Activated CD4-positive, alpha-beta T cell treated with anti-CD3 and anti-CD28 coated beads for 36 hours (primary cell): ENCODE measurements at regions of chr20 and their contacts with region 1.

Region 1: DNA sequence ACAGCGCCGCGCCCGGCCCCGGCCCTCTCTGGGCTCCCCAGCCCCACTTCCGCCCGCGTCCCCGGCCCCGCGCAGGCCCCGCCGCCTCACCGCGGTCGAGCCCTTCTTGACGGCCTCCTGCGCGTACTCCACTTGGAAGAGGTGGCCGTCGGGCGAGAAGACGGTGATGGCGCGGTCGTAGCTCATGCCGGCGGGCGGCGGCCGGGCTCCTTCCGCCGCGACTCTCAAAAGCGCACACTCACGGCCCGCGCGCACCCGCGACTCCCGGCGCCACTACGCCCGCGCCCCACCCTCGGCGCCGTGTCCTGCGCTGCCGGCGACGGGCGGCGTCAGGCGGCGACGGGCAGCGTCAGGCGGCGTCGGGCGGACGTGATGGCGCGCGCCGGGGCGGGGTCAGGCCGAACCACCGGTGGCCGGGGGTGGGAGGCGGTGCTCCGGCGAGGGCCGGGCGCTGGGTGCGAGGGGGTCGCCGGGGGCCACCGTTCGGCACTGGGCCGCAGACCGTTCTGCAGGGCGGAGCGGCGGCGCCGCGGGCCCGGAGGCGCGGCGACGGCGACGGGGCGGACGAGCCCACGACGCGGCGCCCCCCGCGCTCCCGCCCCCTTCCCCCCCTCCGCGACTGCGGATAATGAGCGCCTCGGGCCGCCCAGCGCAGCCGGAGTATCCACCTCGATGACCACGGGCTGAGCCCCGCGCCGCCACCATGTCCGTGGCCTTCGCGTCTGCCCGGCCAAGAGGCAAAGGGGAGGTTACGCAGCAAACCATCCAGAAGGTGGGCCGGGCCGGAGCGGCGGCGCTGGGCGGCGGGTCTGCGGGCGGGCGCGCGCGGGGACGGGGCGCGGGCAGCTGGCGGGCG is at the starts of genes PSMA7 and SS18L1:
- DNase-seq: peak; percentile 92
- ATAC-seq: peak; percentile 87
- H3K4me3 Mint-ChIP-seq: peak within 1 kb of the TSS; percentile 89
- H3K27ac Mint-ChIP-seq: peak within 1 kb of the TSS; percentile 91
- H3K4me1 Mint-ChIP-seq: peaks cover 61% of the 10 kb centered on the region
- H3K27me3 Mint-ChIP-seq: no peaks in the 10 kb centered on the region
- total RNA-seq, gene PSMA7: 208 to 296 TPM
- total RNA-seq, gene SS18L1: 14.3 to 16.6 TPM

Region 2: GRCh38 chr20:62025832-62026563 is 117.3 kb before region 1 on chr20:
- CTCF ChIA-PET with region 1: interaction called, 5 read pairs
- POLR2A ChIA-PET with region 1: no interaction called
- intact Hi-C with region 1: loop called (anchors 2 to 5 kb)
- DNase-seq: peak; percentile 45
- ATAC-seq: peak; percentile 81
- H3K4me3 Mint-ChIP-seq: no peak overlapping the region
- H3K27ac Mint-ChIP-seq: peak overlapping the region; percentile 22
- H3K4me1 Mint-ChIP-seq: peaks cover 54% of the 10 kb centered on the region
- H3K27me3 Mint-ChIP-seq: no peaks in the 10 kb centered on the region

Region 3: DNA sequence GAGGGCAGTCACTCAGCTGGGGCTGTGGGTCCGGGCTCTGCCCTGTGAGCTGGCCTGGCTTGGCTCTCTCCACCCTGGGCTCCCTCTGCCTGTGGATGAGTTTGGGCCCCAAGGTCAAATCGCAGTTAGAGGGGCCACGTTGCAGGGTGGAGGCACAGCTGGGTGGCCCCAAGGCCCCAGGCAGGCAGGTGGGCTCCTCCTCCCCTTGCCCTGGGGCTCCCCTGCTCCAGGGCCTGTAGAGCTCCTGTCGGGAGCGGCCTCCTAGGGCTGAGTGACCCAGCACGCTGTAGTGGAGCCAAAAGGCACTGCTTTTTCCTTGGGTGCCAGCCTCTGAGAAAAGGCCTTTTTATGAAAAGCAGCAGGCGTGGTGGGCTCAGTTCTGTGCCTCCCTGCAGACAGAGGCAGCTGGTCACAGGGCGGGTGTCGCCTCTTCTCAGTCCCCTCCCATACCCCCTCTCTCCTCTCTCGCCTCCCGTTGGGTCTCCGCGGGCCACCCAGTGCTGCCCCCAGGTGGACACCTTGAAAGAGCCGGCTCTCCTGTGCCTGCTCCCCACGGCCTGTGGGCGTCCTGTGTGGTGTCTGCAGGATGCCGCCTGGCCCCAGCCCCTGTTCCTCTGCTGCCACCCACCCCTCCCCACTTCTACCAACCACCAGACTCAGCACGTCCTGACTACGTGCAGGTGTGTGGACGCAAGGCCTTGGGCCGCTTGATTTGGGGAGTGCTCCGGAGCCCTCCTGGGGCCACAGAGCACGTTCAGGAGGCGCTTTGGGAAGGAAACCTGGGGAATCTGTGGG is 13.4 kb after region 1 on chr20:
- CTCF ChIA-PET with region 1: interaction called, 3 read pairs
- POLR2A ChIA-PET with region 1: interaction called, 3 read pairs
- intact Hi-C with region 1: loop called in 1 of 2 experiments (anchors 1 kb)
- DNase-seq: peak; percentile 86
- ATAC-seq: peak; percentile 85
- H3K4me3 Mint-ChIP-seq: no peak overlapping the region
- H3K27ac Mint-ChIP-seq: no peak overlapping the region
- H3K4me1 Mint-ChIP-seq: peaks cover 15% of the 10 kb centered on the region
- H3K27me3 Mint-ChIP-seq: no peaks in the 10 kb centered on the region

Region 4: GRCh38 chr20:62237801-62238571 is 94.6 kb after region 1 on chr20 and contains the start of gene OSBPL2:
- CTCF ChIA-PET with region 1: no interaction called
- POLR2A ChIA-PET with region 1: no interaction called
- intact Hi-C with region 1: loop called (anchors 1 kb)
- DNase-seq: peak; percentile 100
- ATAC-seq: peak; percentile 99
- H3K4me3 Mint-ChIP-seq: peak within 1 kb of the TSS; percentile 77
- H3K27ac Mint-ChIP-seq: peak within 1 kb of the TSS; percentile 74
- H3K4me1 Mint-ChIP-seq: peaks cover 34% of the 10 kb centered on the region
- H3K27me3 Mint-ChIP-seq: no peaks in the 10 kb centered on the region
- total RNA-seq, gene OSBPL2: 19.2 to 23.0 TPM

Region 5: DNA sequence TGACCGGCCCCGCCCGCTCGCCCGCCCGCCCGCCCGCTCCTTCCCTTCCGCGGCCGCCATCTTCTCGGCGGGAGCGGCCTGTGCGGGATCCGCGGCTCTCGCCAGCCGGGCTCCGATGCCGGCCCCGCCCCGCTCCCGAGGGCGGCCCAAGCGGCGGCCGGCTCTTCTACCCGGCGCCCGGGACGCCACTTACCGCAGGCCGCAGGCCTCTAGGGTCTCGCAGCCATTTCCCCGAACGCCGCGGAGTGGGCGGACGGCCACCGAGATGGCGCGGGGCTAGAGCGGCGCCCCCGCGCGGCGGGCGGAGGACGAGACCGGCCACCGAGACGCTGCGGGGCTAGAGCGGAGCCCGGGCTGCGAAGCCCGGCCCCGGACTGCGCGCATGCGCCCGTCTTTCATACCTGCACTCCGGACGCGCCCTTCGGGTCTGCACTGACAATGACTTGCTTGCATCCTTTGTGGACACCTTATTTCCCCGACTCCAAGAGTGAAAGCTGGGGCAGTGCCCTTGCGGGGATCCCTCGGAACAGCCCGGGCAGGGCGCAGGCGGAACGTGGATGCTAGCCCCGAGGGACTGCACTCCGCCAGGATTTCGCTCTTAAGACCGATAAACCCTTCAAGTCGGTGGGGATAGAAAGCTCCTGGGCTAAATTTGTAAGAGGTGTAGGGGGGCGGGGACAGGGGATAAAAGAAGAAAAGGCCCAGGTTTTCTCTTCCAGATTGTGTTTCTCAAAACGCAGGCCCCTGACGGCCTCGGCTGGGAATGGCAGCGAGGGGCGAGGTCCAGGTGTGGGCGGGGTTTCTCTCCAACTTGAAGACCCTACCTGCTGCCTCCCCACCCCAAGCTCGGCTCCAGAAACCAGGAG is 783.1 kb after region 1 on chr20 and contains the start of gene DIDO1:
- CTCF ChIA-PET with region 1: no interaction called
- POLR2A ChIA-PET with region 1: no interaction called
- intact Hi-C with region 1: loop called in 1 of 2 experiments (anchors 5 kb)
- DNase-seq: peak; percentile 94
- ATAC-seq: peak; percentile 78
- H3K4me3 Mint-ChIP-seq: peak within 1 kb of the TSS; percentile 94
- H3K27ac Mint-ChIP-seq: peak within 1 kb of the TSS; percentile 96
- H3K4me1 Mint-ChIP-seq: peaks cover 64% of the 10 kb centered on the region
- H3K27me3 Mint-ChIP-seq: no peaks in the 10 kb centered on the region
- total RNA-seq, gene DIDO1: 43.7 to 49.7 TPM